Uterus (tissue), 4 donors: ENCODE measurements at regions of chr3 and their contacts with region 1.

Region 1: DNA sequence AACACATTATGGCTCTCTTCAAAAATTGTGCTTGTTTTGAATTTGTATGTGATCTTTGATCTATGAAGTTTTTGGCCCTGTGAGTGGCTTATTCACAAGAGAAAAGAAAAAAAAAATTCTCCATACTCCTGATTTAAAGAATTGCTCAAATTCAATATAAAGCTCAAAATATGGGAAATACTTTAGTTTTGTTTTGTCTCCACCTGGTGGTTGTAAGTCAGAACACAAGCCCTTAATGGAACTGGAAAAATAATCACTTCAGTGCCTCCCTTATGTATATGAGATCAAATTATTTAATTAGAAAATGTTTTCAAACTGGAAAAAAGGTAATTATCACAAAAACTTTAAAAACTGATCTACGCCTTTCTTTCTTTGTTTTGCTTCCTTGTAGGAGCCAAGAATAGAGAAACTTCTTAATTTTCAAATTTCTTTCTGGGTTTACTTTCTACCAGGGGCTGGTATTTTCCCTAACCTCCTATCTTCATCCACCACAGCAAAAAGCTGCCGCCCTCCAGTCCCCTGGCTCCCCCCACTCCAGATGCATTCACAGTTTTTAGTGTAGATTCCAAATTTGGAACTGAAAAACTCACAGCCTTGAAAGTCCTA is 50.6 kb downstream of the SERP1 start:
- DNase-seq: no peak
- H3K4me3 ChIP-seq: no peak overlapping the region
- H3K27ac ChIP-seq: no peak overlapping the region
- H3K4me1 ChIP-seq: no peaks in the 10 kb centered on the region
- H3K27me3 ChIP-seq: no peaks in the 10 kb centered on the region
- CTCF ChIP-seq: peak; percentile 73 to 82 (median 77)
- POLR2A ChIP-seq: no peak

Region 2: DNA sequence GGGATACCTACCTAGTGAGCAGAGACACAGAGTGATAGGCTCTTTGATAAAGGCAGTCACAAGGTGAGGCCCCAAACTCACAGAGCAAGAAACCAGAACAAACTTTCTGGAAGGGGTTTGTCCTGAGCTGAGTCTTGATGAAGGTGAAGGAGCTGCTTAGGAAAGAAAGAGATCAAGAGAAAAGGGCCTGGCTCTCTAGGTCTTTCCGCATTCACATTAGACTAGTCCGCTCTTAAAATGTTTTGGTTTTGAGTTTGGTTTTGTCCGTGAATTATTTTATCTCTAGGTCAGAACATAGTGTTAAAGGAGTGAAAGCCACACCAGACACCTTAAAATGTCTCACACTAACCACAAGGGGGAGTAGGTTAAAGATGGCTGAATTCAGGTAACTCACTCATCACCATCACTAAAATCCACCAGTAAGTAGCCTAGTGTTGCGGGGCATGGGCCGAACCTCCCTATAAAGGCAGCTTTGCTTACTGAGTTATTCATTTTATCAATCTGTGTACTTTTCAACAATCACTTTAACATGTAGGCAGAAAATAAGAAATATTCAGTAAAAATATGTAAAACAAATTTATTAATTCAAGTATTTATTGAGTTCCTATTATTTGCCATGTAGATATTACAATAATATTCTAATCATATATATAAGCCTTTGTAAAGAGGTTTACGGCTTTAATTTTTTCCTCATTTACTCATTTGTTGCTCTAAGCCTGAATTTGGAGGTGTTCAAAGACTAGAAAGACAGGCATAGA is 209.1 kb before region 1 on chr3:
- intact Hi-C with region 1: loop called (anchors 5 kb)
- DNase-seq: no peak
- H3K4me3 ChIP-seq: no peak overlapping the region
- H3K27ac ChIP-seq: no peak overlapping the region
- H3K4me1 ChIP-seq: no peaks in the 10 kb centered on the region
- H3K27me3 ChIP-seq: no peaks in the 10 kb centered on the region
- CTCF ChIP-seq: peak in 3 of 4 experiments; percentile 55 to 64 (median 57)
- POLR2A ChIP-seq: no peak

Region 3: DNA sequence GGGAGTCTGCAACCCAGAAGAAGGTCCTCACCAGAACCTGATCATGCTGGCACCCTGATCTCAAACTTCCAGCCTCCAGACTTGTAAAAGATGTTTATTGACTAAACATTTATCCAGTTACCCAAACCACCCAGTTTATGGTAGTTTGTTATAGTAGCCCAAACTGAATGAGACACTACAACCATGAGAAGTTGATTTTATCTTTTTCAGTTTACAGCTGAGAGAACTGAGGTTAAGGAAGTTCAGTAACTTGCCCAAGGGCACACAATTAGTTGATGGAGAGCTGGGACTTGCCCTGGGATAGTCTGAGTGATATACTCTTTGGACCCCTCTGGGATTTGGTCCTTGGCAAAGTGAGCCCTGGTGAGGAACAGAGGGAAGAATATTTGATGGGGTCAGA is 154.6 kb after region 1 on chr3:
- intact Hi-C with region 1: no loop called
- DNase-seq: no peak
- H3K4me3 ChIP-seq: no peak overlapping the region
- H3K27ac ChIP-seq: no peak overlapping the region
- H3K4me1 ChIP-seq: no peaks in the 10 kb centered on the region
- H3K27me3 ChIP-seq: no peaks in the 10 kb centered on the region
- CTCF ChIP-seq: no peak
- POLR2A ChIP-seq: no peak